ENCODE measurements at regions of chr20 and their contacts with region 1.

Region 1: DNA sequence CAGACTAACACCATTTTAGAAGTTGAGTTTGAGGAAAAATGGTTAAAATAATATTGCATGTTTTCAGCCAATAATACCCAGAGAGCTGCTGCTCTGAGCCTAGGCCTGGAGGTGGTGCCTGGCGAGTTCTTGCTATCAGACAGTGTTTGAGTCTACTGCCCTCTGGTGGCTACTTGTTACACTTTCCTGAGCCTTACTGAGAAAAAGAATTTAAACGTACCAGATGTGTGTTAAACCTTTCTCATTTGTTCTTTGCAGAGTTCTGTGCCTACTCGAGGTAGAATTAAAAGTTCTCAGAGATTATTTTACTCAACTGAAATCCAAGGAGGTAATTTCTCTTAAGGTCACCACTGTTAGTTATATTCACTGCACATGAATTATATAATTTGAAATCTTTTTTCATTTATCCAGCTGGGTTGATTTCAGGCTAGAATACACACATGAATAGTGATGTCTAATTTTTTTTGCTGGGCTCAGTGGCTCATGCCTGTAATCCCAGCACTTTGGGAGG is 38.2 kb downstream of the SHLD1 start:
- DNase-seq: peak; percentile 88
- ATAC-seq: peak; percentile 99
- H3K4me3 ChIP-seq: no peak overlapping the region
- H3K27ac ChIP-seq: no peak overlapping the region
- H3K4me1 ChIP-seq: peaks cover 15 to 23% of the 10 kb centered on the region in 2 experiments
- H3K27me3 ChIP-seq: no peaks in the 10 kb centered on the region
- CTCF ChIP-seq: peak; percentile 80 to 95 (median 90)
- POLR2A ChIP-seq: no peak
- RAD21 ChIP-seq: peak; percentile 96

Region 2: DNA sequence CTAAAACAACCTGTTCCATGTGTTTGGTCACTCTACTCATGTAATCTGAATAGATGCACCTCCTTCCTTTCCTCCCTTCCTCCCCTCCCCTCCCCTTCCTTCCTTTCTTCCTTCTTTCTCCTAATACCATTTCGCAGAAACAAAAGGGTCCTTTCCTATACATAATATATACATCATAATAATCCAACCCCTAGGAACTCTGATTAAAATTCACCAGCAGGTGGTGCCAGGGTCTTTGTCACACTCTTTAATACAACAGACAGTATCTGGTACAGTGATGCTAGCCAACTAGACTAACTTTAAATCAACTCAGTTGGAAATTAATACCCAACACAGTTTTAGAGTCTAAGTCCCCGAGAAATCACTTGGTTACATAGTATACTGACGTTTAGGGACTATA is 219.4 kb before region 1 on chr20:
- CTCF ChIA-PET with region 1: interaction called, 17 read pairs
- POLR2A ChIA-PET with region 1: no interaction called
- RAD21 ChIA-PET with region 1: interaction called, 4 to 12 read pairs
- intact Hi-C with region 1: loop called (anchors 1 kb)
- DNase-seq: peak; percentile 28
- ATAC-seq: peak; percentile 84
- H3K4me3 ChIP-seq: no peak overlapping the region
- H3K27ac ChIP-seq: no peak overlapping the region
- H3K4me1 ChIP-seq: no peaks in the 10 kb centered on the region
- H3K27me3 ChIP-seq: no peaks in the 10 kb centered on the region
- CTCF ChIP-seq: peak; percentile 31 to 52 (median 40); a peak in 4 of 6 replicates
- POLR2A ChIP-seq: no peak
- RAD21 ChIP-seq: peak; percentile 62

Region 3: GRCh38 chr20:5776077-5776476 is 12.4 kb before region 1 on chr20:
- CTCF ChIA-PET with region 1: interaction called, 10 read pairs
- POLR2A ChIA-PET with region 1: no interaction called
- RAD21 ChIA-PET with region 1: no interaction called
- intact Hi-C with region 1: no loop called
- DNase-seq: no peak
- ATAC-seq: no peak
- H3K4me3 ChIP-seq: no peak overlapping the region
- H3K27ac ChIP-seq: no peak overlapping the region
- H3K4me1 ChIP-seq: peaks cover 0 to 4% of the 10 kb centered on the region in 2 experiments; a peak in 1 of 4 replicates
- H3K27me3 ChIP-seq: no peaks in the 10 kb centered on the region
- CTCF ChIP-seq: no peak
- POLR2A ChIP-seq: no peak
- RAD21 ChIP-seq: no peak